Kidney (tissue), 22 donors: ENCODE measurements at regions of chr7 and their contacts with region 1.

Region 1: DNA sequence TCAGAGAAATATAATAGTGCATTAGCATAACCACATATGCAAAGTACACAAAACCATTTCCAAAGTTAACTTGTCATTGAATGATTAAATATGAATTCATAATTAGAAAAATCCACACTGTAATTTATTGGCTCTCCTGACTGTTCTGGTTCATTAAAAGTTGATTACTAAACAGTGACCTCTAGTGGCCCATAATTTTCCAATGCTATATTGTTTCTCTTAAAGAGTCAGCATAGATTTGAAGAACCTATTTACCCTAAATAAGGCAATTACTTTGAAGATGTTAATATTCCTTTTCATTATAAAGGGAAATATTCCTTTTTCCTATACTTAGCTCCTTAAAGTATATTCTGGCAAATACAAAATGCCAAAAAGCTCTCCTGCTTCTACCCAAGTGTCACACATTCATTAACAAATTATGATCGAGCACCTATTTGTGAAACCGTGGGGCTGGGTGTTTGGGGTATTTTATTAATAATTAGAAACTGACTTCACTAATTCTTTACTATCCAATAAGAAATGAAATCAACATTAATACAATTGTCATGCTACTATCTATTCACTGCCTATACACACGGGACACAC is 86.2 kb downstream of the HIBADH start:
- DNase-seq: peak in 2 of 5 donors; percentile 73 to 74
- H3K4me3 ChIP-seq: no peak overlapping the region
- H3K27ac ChIP-seq: no peak overlapping the region
- H3K4me1 ChIP-seq: peaks cover 0 to 11% (median 0%) of the 10 kb centered on the region in 3 donors
- H3K27me3 ChIP-seq: no peaks in the 10 kb centered on the region
- CTCF ChIP-seq: peak; percentile 34

Region 2: DNA sequence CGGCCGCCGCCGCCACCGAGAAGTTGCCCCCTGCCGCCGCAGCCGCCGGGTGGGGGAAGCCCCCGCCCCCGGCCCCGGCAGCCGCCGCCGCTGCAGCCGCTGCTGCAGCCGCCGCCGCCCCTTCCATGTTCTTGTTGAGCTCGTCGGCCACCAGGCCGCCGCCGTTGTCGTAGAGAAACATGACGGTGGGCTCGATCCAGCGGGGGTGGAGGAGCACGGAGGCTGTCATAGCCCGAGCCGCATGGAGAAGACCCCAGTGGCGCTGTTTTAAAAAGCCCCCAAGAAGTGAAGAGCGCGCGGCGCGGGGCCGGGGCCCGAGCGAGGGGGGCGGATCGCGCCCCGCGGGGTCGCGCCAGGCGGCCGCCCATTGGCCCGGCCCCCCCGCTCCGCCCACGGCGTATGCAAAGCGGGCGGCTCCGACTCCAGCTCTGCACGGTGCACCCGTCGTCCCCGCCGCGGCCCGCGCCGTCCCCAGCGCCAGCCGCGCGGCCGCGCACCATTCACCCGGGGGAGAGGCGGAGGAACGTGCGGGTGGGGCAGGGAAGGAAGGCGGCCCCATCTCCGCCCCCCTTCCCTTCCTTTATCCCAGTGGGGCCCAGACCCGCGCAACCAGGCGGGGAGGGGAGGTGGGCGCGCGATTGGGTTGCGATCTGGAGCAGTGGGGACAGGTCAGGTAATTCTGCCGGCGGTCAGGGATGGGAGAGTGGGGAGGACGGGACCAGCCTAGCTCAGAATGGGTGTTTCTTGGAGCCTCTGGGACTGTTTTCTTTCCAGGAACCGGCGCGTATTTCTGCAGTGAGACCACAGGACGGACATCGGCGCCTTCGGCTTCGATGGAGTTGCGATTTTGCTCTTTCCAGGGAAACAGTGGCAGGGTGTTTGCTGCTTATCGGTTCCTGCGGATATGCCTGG is 376.3 kb before region 1 on chr7 and contains the start of gene HOXA13:
- intact Hi-C with region 1: loop called (anchors 10 kb)
- DNase-seq: peak; percentile 51 to 75 (median 64)
- H3K4me3 ChIP-seq: peak within 1 kb of the TSS in 2 of 3 donors; percentile 10 to 15
- H3K27ac ChIP-seq: no peak within 1 kb of the TSS
- H3K4me1 ChIP-seq: peaks cover 0 to 7% (median 5%) of the 10 kb centered on the region in 3 donors
- H3K27me3 ChIP-seq: peaks cover 88% of the 10 kb centered on the region
- CTCF ChIP-seq: no peak
- total RNA-seq, gene HOXA13: 0.44 TPM

Region 3: DNA sequence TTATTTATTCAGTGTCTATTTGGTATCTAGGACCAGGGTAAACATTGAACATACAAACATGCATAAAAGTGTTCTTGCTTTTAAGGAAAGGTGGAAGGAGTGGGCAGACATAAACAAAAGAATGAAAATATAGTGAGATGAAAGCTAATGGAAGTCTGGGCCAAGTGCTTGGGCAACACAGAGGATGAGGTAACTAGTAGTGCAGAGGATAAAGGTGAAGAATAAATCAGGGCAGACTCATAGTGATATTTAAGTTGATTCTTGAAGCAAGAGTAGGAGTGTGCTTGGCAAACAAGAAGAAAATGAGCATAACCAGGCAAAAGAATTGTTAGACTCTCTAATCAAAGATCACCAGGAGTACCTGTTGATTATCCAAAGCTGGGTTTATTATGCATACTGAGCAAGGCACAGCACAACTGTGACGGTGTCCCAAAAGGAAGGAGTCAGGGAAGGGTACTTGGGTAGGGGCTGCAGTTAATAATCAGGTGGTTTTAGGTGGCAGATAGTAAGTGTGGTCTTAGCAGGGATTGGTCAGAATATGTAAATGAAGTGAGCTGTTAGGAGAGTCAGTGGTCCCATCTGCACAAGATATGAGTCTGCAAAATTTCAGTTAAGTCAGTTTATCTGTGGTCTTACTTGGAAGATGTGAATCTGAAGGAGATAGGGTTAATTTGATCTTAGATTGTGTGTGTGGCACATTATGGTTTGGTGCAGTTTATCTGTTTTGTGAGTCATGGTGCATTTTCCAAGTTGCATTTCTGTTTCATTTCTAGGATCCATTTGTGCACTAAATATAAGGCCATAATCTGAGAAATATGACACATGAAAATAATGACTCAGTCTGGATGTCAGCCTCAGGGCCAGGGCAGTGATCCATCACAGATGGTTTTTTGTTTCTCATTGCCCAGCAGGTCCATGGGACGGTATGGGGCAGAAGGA is 133.0 kb after region 1 on chr7:
- intact Hi-C with region 1: no loop called
- DNase-seq: no peak
- H3K4me3 ChIP-seq: no peak overlapping the region
- H3K27ac ChIP-seq: no peak overlapping the region
- H3K4me1 ChIP-seq: no peaks in the 10 kb centered on the region
- H3K27me3 ChIP-seq: no peaks in the 10 kb centered on the region
- CTCF ChIP-seq: no peak